GM10248 (cell line): ENCODE measurements at regions of chr6 and their contacts with region 1.

Region 1: GRCh38 chr6:44397424-44398164 is 10.1 kb downstream of the CDC5L start:
- DNase-seq: no peak
- CTCF ChIP-seq: no peak

Region 2: GRCh38 chr6:44407951-44408670 is 10.5 kb after region 1 on chr6:
- CTCF ChIA-PET with region 1: interaction called, 34 read pairs
- POLR2A ChIA-PET with region 1: no interaction called
- DNase-seq: no peak
- CTCF ChIP-seq: no peak

Region 3: GRCh38 chr6:44456070-44456965 is 58.7 kb after region 1 on chr6:
- CTCF ChIA-PET with region 1: no interaction called
- POLR2A ChIA-PET with region 1: no interaction called
- DNase-seq: peak; percentile 78
- CTCF ChIP-seq: peak; percentile 70